ENCODE measurements at regions of chr1 and their contacts with region 1.

Region 1: GRCh38 chr1:28417429-28417922 is 47.9 kb downstream of the PHACTR4 start:
- DNase-seq: no peak
- ATAC-seq: peak; percentile 62
- H3K4me3 Mint-ChIP-seq: peak overlapping the region; percentile 5
- H3K27ac Mint-ChIP-seq: peak overlapping the region; percentile 41
- H3K4me1 Mint-ChIP-seq: peaks cover 14% of the 10 kb centered on the region
- H3K27me3 Mint-ChIP-seq: no peaks in the 10 kb centered on the region
- CTCF ChIP-seq: no peak

Region 2: GRCh38 chr1:28244549-28245251 is 172.8 kb before region 1 on chr1:
- CTCF ChIA-PET with region 1: no interaction called
- POLR2A ChIA-PET with region 1: no interaction called
- intact Hi-C with region 1: no loop called
- DNase-seq: no peak
- ATAC-seq: no peak
- H3K4me3 Mint-ChIP-seq: peak overlapping the region; percentile 80
- H3K27ac Mint-ChIP-seq: peak overlapping the region; percentile 92
- H3K4me1 Mint-ChIP-seq: peaks cover 62% of the 10 kb centered on the region
- H3K27me3 Mint-ChIP-seq: no peaks in the 10 kb centered on the region
- CTCF ChIP-seq: no peak

Region 3: DNA sequence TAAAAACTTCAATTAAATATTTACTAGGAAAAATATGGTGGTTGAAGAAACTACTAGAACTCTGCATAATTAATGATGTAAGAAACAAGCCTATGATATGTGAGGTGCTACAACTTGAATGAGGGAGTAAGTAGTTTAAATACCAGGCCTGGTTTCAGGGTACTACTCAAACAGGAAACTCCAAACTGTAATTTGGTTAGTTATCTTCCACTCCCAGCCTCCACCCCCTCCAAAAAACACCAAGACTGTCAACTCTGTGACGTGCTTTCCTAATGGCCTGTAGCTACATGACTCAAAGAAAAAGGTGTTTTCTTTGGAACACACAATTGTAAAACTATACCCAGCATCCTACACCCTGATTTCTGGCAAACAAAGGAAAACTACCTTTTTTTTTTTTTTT is 32.4 kb after region 1 on chr1:
- CTCF ChIA-PET with region 1: no interaction called
- POLR2A ChIA-PET with region 1: no interaction called
- intact Hi-C with region 1: loop called (anchors 5 kb)
- DNase-seq: no peak
- ATAC-seq: no peak
- H3K4me3 Mint-ChIP-seq: no peak overlapping the region
- H3K27ac Mint-ChIP-seq: no peak overlapping the region
- H3K4me1 Mint-ChIP-seq: peaks cover 18% of the 10 kb centered on the region
- H3K27me3 Mint-ChIP-seq: no peaks in the 10 kb centered on the region
- CTCF ChIP-seq: no peak

Measured in activated B cell treated with CpG ODN at 0.5 μM for 24 hours (primary cell).